Activated naive CD4-positive, alpha-beta T cell treated with anti-CD3 and anti-CD28 coated beads for 36 hours (primary cell): ENCODE measurements at regions of chr14 and their contacts with region 1.

Region 1: DNA sequence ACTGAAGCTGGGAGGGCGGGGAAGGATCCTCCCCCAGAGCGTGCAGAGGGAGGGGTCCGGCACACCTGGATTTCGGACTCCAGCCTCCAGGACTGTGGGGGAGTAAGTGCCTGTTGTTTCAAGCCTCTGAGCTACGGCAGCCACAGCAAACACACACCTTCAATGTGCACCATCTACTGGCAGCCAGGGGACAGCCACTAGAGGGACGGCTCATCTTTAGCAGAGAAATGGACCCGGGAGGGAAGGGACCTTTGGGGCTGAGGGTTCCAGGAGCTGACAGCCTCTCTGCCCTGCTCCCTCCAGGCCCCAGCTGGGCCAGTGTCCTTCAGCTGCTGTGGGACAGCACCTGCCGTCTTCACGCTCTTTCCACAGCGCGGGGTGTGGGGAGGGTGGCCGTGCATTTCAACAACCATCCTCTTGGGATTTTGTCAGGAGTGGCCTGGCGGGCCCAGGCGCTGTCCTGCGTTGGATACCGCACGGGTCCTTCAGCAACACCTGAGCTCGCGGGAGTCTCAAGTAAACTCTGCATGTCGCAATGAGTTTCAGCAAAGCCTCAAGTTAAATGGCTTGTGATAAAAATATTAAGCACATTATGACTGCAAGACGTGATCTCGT is 209.2 kb upstream of the C14orf180 start:
- DNase-seq: no peak
- H3K4me3 Mint-ChIP-seq: no peak overlapping the region
- H3K27ac Mint-ChIP-seq: no peak overlapping the region
- H3K4me1 Mint-ChIP-seq: peaks cover 9% of the 10 kb centered on the region
- H3K27me3 Mint-ChIP-seq: no peaks in the 10 kb centered on the region

Region 2: GRCh38 chr14:104064003-104064402 is 306.4 kb before region 1 on chr14:
- CTCF ChIA-PET with region 1: no interaction called
- intact Hi-C with region 1: no loop called
- DNase-seq: no peak
- H3K4me3 Mint-ChIP-seq: no peak overlapping the region
- H3K27ac Mint-ChIP-seq: no peak overlapping the region
- H3K4me1 Mint-ChIP-seq: no peaks in the 10 kb centered on the region
- H3K27me3 Mint-ChIP-seq: peaks cover 30% of the 10 kb centered on the region

Region 3: GRCh38 chr14:104341532-104342434 is 28.6 kb before region 1 on chr14:
- CTCF ChIA-PET with region 1: no interaction called
- intact Hi-C with region 1: loop called (anchors 1 kb)
- DNase-seq: peak; percentile 48
- H3K4me3 Mint-ChIP-seq: no peak overlapping the region
- H3K27ac Mint-ChIP-seq: no peak overlapping the region
- H3K4me1 Mint-ChIP-seq: no peaks in the 10 kb centered on the region
- H3K27me3 Mint-ChIP-seq: peaks cover 2% of the 10 kb centered on the region